MCF 10A (cell line): ENCODE measurements at regions of chr19 and their contacts with region 1.

Region 1: GRCh38 chr19:47210689-47211316 is 20.2 kb downstream of the BBC3 start:
- DNase-seq: peak; percentile 86
- H3K4me3 Mint-ChIP-seq: peak overlapping the region; percentile 31
- H3K27ac Mint-ChIP-seq: peak overlapping the region; percentile 88
- H3K4me1 Mint-ChIP-seq: peaks cover 7% of the 10 kb centered on the region
- H3K27me3 Mint-ChIP-seq: no peaks in the 10 kb centered on the region
- CTCF ChIP-seq: peak; percentile 77

Region 2: GRCh38 chr19:47152224-47153017 is 58.4 kb before region 1 on chr19:
- CTCF ChIA-PET with region 1: interaction called, 33 read pairs
- POLR2A ChIA-PET with region 1: interaction called, 13 read pairs
- intact Hi-C with region 1: no loop called
- DNase-seq: no peak
- H3K4me3 Mint-ChIP-seq: peak overlapping the region; percentile 13
- H3K27ac Mint-ChIP-seq: peak overlapping the region; percentile 79
- H3K4me1 Mint-ChIP-seq: peaks cover 13% of the 10 kb centered on the region
- H3K27me3 Mint-ChIP-seq: no peaks in the 10 kb centered on the region
- CTCF ChIP-seq: no peak

Region 3: GRCh38 chr19:47190167-47190727 is 20.6 kb before region 1 on chr19:
- CTCF ChIA-PET with region 1: interaction called, 11 read pairs
- POLR2A ChIA-PET with region 1: no interaction called
- intact Hi-C with region 1: no loop called
- DNase-seq: peak; percentile 43
- H3K4me3 Mint-ChIP-seq: no peak overlapping the region
- H3K27ac Mint-ChIP-seq: no peak overlapping the region
- H3K4me1 Mint-ChIP-seq: peaks cover 6% of the 10 kb centered on the region
- H3K27me3 Mint-ChIP-seq: no peaks in the 10 kb centered on the region
- CTCF ChIP-seq: no peak

Region 4: DNA sequence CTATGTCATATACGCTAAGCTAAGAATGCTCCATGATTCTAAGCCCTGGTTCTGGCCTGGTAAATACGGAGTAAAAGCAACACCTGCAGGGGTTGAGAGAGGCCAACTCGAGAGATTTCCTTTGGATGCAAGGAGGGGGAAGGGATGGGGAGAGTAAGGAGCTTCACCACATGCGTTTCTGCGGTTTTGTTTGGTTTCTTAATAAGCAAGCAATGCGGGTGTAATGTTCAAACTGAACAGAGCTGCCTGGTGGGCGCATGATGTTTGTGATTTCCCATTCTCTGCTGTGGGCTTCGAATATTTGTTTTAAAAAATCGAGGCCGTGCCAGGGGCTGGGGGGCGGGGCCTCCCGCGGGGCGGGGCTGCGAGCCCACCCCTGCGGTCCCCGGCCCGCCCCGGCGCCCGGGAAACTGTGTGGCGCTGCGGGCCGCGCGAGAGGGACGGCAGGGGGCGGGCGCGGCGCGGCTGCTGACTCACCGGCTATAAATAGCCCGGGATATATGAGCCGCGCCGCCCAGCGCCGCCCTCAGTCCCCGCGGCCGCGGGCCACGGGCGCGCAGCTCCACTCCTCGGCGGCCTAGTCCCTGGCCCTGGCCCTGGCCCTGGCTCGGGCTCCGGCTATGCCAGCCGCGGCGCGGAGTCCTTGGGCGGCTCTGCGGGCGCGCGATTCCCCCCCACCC is 15.1 kb after region 1 on chr19:
- CTCF ChIA-PET with region 1: interaction called, 46 read pairs
- POLR2A ChIA-PET with region 1: interaction called, 56 read pairs
- intact Hi-C with region 1: loop called (anchors 1 kb)
- DNase-seq: peak; percentile 85
- H3K4me3 Mint-ChIP-seq: peak overlapping the region; percentile 45
- H3K27ac Mint-ChIP-seq: no peak overlapping the region
- H3K4me1 Mint-ChIP-seq: peaks cover 6% of the 10 kb centered on the region
- H3K27me3 Mint-ChIP-seq: no peaks in the 10 kb centered on the region
- CTCF ChIP-seq: peak; percentile 26

Region 5: GRCh38 chr19:47256688-47257443 is 46.1 kb after region 1 on chr19:
- CTCF ChIA-PET with region 1: interaction called, 3 read pairs
- POLR2A ChIA-PET with region 1: interaction called, 12 read pairs
- intact Hi-C with region 1: no loop called
- DNase-seq: peak; percentile 99
- H3K4me3 Mint-ChIP-seq: peak overlapping the region; percentile 97
- H3K27ac Mint-ChIP-seq: peak overlapping the region; percentile 99
- H3K4me1 Mint-ChIP-seq: peaks cover 26% of the 10 kb centered on the region
- H3K27me3 Mint-ChIP-seq: no peaks in the 10 kb centered on the region
- CTCF ChIP-seq: no peak